ENCODE measurements at regions of chr9 and their contacts with region 1.

Region 1: DNA sequence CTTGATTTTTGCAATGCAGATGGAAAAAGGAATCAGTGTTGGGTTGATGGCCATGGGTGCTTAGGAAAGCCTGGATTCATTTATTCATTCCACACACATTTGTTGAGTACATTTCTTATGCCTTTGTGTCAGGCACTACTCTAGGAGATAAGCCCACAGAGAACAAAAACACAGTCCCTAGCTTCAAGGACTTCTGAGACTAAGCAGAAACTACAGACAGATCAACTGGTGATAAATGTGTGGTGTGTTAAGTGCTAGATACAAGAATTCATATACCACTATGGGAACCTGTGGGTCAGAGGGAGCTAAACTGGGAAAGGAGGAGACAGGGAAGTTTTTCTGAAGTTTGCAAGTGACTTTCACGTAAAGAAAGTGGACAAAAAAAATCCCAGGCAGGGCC is 119.9 kb downstream of the CEMIP2 start:
- DNase-seq: no peak
- ATAC-seq: no peak
- H3K4me3 ChIP-seq: no peak overlapping the region
- H3K4me3 Mint-ChIP-seq: no peak overlapping the region
- H3K27ac ChIP-seq: no peak overlapping the region
- H3K27ac Mint-ChIP-seq: no peak overlapping the region
- H3K4me1 ChIP-seq: peaks cover 15% of the 10 kb centered on the region
- H3K4me1 Mint-ChIP-seq: peaks cover 20% of the 10 kb centered on the region
- H3K27me3 ChIP-seq: no peaks in the 10 kb centered on the region
- H3K27me3 Mint-ChIP-seq: peaks cover 3% of the 10 kb centered on the region
- CTCF ChIP-seq: no peak

Region 2: DNA sequence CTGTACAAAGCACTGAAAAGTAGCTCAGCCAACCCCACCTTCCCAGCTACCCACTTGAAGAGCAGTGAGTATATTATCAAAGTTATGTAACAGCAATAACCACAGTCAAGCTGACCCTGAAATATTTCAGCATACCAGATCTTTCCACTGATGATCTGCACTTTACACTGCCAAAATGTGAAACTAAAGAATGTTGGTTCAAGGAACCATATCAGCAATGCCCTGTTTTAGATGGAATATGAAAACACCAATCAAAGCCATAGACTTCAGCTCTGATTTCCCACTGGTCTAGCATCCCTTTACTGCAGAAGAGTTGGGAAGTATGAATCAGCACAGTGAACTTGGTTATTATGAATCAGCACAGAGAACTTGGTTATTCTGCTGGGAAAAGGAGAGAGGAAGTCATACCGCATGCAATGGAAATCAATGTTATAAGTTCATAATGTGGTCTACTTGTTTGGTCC is 99.9 kb after region 1 on chr9:
- CTCF ChIA-PET with region 1: no interaction called
- POLR2A ChIA-PET with region 1: no interaction called
- intact Hi-C with region 1: loop called in 1 of 2 experiments (anchors 1 kb)
- DNase-seq: no peak
- ATAC-seq: no peak
- H3K4me3 ChIP-seq: no peak overlapping the region
- H3K4me3 Mint-ChIP-seq: no peak overlapping the region
- H3K27ac ChIP-seq: no peak overlapping the region
- H3K27ac Mint-ChIP-seq: no peak overlapping the region
- H3K4me1 ChIP-seq: peaks cover 8% of the 10 kb centered on the region
- H3K4me1 Mint-ChIP-seq: peaks cover 33% of the 10 kb centered on the region
- H3K27me3 ChIP-seq: no peaks in the 10 kb centered on the region
- H3K27me3 Mint-ChIP-seq: no peaks in the 10 kb centered on the region
- CTCF ChIP-seq: no peak

Region 3: DNA sequence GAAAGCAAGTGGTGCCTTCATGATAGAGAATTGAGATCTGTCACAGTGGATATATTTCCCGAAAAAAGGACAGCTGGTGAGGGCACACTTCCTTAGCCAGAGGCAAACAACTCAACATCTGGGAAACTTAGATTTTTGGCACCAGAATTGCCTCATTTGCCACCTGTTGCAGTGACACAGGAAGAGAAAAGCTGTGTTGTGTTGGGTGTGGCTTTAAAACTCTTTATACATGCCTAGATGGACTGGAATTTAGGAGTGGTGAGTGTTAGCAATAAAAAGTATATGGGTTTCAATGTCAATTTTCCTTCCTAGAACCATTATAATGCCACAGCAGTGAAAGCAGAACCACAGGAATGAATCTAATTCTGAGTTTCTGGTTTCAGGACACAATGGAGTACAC is 182.5 kb after region 1 on chr9:
- CTCF ChIA-PET with region 1: no interaction called
- POLR2A ChIA-PET with region 1: no interaction called
- intact Hi-C with region 1: no loop called
- DNase-seq: no peak
- ATAC-seq: no peak
- H3K4me3 ChIP-seq: no peak overlapping the region
- H3K4me3 Mint-ChIP-seq: no peak overlapping the region
- H3K27ac ChIP-seq: no peak overlapping the region
- H3K27ac Mint-ChIP-seq: no peak overlapping the region
- H3K4me1 ChIP-seq: no peaks in the 10 kb centered on the region
- H3K4me1 Mint-ChIP-seq: no peaks in the 10 kb centered on the region
- H3K27me3 ChIP-seq: no peaks in the 10 kb centered on the region
- H3K27me3 Mint-ChIP-seq: no peaks in the 10 kb centered on the region
- CTCF ChIP-seq: no peak

Region 4: GRCh38 chr9:72807765-72808445 is 1159.5 kb after region 1 on chr9:
- CTCF ChIA-PET with region 1: no interaction called
- POLR2A ChIA-PET with region 1: no interaction called
- intact Hi-C with region 1: no loop called
- DNase-seq: no peak
- ATAC-seq: no peak
- H3K4me3 ChIP-seq: no peak overlapping the region
- H3K4me3 Mint-ChIP-seq: no peak overlapping the region
- H3K27ac ChIP-seq: no peak overlapping the region
- H3K27ac Mint-ChIP-seq: no peak overlapping the region
- H3K4me1 ChIP-seq: no peaks in the 10 kb centered on the region
- H3K4me1 Mint-ChIP-seq: no peaks in the 10 kb centered on the region
- H3K27me3 ChIP-seq: no peaks in the 10 kb centered on the region
- H3K27me3 Mint-ChIP-seq: no peaks in the 10 kb centered on the region
- CTCF ChIP-seq: no peak